ENCODE measurements at regions of chr16 and their contacts with region 1.

Region 1: DNA sequence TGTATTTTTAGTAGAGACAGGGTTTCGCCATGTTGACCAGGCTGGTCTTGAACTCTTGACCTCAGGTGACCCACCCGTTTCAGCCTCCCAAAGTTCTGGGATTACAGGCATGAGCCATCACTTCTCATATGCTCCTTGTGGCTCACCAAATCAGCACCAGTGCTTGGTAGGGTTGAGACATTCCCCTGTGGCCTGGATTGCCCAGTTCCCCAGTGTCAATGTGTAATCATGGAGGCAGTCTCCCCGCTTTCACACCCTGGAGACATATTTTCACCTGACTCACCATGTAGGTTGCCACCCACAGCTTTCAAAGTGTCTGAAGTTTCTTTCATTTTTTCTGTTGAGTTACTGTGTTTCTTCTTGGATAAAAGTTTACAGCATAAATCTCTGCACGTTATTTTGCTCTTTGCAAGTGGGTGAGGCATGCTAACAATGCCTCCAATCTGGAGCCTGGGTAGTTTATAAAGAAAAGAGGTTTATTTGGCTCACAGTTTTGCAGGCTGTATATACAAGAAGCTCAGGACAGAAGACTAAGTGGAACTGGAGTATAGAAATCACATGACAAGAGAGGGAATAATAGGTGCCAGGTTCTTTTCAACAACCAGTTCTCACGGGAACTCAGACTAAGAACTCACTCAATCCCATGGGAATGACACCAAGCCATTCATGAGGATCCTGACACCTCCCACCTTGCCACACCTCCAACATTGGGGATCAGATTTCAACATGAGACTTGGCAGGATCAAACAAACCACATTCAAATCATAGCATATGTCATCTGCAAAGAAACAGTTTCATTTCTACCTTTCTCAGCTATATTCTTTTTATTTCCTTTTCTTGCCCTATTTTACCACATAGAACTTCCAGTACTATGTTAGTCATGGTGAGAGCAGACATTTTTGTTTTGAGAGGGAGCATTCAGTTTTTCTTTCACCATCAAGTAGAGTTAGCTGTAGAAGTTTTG is 113.2 kb downstream of the PHKB start:
- DNase-seq: peak; percentile 67
- H3K4me3 Mint-ChIP-seq: peak overlapping the region; percentile 26
- H3K27ac Mint-ChIP-seq: peak overlapping the region; percentile 80
- H3K4me1 Mint-ChIP-seq: peaks cover 64% of the 10 kb centered on the region
- H3K27me3 Mint-ChIP-seq: no peaks in the 10 kb centered on the region

Region 2: GRCh38 chr16:46822270-46822669 is 752.1 kb before region 1 on chr16:
- CTCF ChIA-PET with region 1: no interaction called
- POLR2A ChIA-PET with region 1: no interaction called
- intact Hi-C with region 1: loop called (anchors 10 kb)
- DNase-seq: peak; percentile 74
- H3K4me3 Mint-ChIP-seq: no peak overlapping the region
- H3K27ac Mint-ChIP-seq: no peak overlapping the region
- H3K4me1 Mint-ChIP-seq: peaks cover 32% of the 10 kb centered on the region
- H3K27me3 Mint-ChIP-seq: no peaks in the 10 kb centered on the region

Region 3: DNA sequence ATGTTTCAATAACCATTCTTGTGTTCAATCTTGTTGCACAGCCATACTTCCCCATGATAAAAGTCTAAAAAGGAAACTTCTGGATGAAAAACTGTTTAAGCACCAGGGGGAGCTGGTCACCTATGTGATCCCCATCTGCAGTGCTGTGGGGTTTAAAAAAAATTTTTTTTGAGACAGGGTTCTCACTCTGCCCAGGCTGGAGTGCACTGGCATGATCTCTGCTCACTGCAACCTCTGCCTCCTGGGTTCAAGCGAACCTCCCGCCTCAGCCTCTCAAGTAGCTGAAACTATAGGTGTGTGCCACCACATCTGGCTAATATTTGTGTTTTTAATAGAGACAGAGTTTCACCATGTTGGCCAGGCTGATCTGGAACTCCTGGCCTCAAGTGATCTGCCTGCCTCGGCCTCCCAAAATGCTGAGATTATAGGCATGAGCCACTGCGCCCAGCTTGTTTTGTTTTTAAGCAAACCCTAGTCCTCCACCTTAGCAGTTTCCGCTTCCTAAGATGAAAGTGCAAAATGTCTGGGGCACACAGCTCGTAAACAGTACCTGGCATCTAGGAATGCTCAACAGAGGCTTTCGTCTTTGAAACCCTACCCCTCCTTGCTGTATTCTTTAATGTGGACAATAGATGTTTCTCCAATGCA is 626.3 kb before region 1 on chr16:
- CTCF ChIA-PET with region 1: no interaction called
- POLR2A ChIA-PET with region 1: no interaction called
- intact Hi-C with region 1: loop called (anchors 5 kb)
- DNase-seq: peak; percentile 57
- H3K4me3 Mint-ChIP-seq: no peak overlapping the region
- H3K27ac Mint-ChIP-seq: peak overlapping the region; percentile 76
- H3K4me1 Mint-ChIP-seq: peaks cover 34% of the 10 kb centered on the region
- H3K27me3 Mint-ChIP-seq: no peaks in the 10 kb centered on the region

Region 4: DNA sequence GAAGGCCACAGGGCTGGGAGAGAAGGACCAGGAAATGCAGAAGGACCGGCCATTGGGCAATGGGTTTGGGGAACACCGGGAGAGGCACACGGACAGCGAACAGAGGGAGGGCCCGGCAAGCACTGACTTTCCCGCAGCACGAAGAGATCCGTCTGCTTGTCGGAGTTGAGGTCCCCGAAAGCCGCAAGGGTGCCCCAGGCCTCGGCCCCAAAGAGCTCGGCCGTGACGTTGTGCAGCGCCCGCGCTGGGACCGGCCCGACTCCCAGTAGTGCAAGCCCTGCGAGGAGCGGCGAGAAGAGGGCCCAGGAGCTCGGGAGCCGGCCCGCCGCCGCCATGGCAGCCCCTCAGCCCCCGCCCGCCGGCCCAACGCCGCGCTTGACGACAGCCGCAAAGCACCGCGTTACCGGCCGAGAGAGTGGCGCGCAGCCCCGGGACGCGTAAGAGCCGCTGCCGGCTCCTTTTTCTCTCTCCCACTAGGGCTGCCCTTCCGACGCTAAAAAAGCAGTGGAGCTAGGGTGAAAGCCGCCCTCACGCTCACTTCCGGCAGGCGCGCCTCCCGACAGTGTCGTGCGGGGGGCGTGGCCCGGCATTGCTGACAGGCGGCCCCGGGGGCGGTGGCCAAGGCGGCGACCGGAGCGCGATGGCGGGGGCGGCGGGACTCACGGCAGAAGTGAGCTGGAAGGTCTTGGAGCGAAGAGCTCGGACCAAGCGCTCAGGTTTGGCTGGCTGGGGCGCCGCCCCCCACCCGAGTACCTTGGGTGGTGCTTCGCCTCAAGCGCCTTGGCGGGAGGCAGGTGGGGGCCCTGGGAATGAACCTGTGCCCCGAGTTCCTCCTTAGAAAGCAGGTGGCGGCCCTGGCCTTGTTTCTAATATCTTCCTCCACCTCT is 113.4 kb before region 1 on chr16 and contains the starts of genes ITFG1 and PHKB:
- CTCF ChIA-PET with region 1: no interaction called
- POLR2A ChIA-PET with region 1: no interaction called
- intact Hi-C with region 1: loop called (anchors 1 kb)
- DNase-seq: peak; percentile 96
- H3K4me3 Mint-ChIP-seq: peak within 1 kb of the TSS; percentile 93
- H3K27ac Mint-ChIP-seq: peak within 1 kb of the TSS; percentile 95
- H3K4me1 Mint-ChIP-seq: peaks cover 53% of the 10 kb centered on the region
- H3K27me3 Mint-ChIP-seq: no peaks in the 10 kb centered on the region
- total RNA-seq, gene ITFG1: 20.6 to 22.0 TPM
- total RNA-seq, gene PHKB: 27.6 to 28.8 TPM

Region 5: DNA sequence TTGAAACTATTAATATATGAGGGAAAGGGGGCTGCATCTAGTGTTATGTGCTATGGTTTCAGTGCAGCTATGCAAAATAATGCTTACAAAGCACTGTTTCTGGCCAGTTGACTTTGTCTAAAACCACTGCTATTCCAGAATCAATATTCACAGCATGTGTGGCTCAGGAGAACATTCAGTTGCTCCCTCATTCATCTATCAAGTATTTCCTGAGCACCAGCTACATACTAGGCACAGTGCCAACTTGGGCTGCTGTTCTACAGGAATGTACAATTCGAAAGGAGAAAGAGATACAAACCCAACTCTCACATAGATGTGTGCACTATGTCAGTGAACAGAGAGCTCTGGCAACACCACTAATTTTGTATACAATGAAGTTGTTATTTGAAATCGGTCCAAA is 69.8 kb after region 1 on chr16:
- CTCF ChIA-PET with region 1: no interaction called
- POLR2A ChIA-PET with region 1: no interaction called
- intact Hi-C with region 1: no loop called
- DNase-seq: no peak
- H3K4me3 Mint-ChIP-seq: no peak overlapping the region
- H3K27ac Mint-ChIP-seq: no peak overlapping the region
- H3K4me1 Mint-ChIP-seq: no peaks in the 10 kb centered on the region
- H3K27me3 Mint-ChIP-seq: no peaks in the 10 kb centered on the region

Region 6: GRCh38 chr16:47732523-47733111 is 158.2 kb after region 1 on chr16:
- CTCF ChIA-PET with region 1: no interaction called
- POLR2A ChIA-PET with region 1: no interaction called
- intact Hi-C with region 1: loop called (anchors 1 kb)
- DNase-seq: peak; percentile 54
- H3K4me3 Mint-ChIP-seq: no peak overlapping the region
- H3K27ac Mint-ChIP-seq: peak overlapping the region; percentile 30
- H3K4me1 Mint-ChIP-seq: peaks cover 6% of the 10 kb centered on the region
- H3K27me3 Mint-ChIP-seq: peaks cover 10% of the 10 kb centered on the region

Region 7: GRCh38 chr16:47779201-47780016 is 205.0 kb after region 1 on chr16:
- CTCF ChIA-PET with region 1: no interaction called
- POLR2A ChIA-PET with region 1: no interaction called
- intact Hi-C with region 1: loop called (anchors 1 kb)
- DNase-seq: peak; percentile 61
- H3K4me3 Mint-ChIP-seq: peak overlapping the region; percentile 68
- H3K27ac Mint-ChIP-seq: peak overlapping the region; percentile 64
- H3K4me1 Mint-ChIP-seq: peaks cover 15% of the 10 kb centered on the region
- H3K27me3 Mint-ChIP-seq: no peaks in the 10 kb centered on the region

Region 8: GRCh38 chr16:48123104-48123788 is 548.9 kb after region 1 on chr16:
- CTCF ChIA-PET with region 1: no interaction called
- POLR2A ChIA-PET with region 1: no interaction called
- intact Hi-C with region 1: loop called (anchors 10 kb)
- DNase-seq: peak; percentile 87
- H3K4me3 Mint-ChIP-seq: no peak overlapping the region
- H3K27ac Mint-ChIP-seq: no peak overlapping the region
- H3K4me1 Mint-ChIP-seq: peaks cover 29% of the 10 kb centered on the region
- H3K27me3 Mint-ChIP-seq: peaks cover 12% of the 10 kb centered on the region